HEK293T (cell line): ENCODE measurements at regions of chr12 and their contacts with region 1.

Region 1: DNA sequence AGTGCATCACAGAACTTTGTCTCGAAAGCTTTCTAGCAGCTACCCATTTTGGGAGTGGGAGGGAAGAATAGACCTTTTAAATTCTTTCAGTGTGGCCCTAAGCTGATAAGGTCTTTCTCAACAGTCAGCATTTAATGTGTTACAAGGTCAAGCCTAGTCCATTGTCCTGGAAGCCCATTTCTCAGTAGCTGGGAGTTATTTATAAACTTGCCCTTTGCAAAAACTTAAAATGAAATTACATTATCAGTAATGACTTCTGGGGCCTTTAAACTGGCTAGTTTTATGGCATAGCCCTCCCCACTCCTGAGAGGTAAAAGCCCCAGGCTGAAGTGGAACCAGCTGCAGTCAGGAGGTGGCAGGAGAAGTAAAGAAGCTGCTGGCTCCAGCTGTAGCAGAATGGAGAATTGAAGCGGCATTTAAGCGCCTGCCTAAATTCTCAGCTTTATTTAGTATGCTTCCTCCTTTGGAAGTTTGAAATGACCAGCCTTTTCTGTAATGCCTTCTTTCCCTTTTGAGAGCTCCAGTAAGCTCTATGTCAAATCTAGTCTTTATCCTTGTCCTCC is 12.4 kb downstream of the COPZ1 start:
- DNase-seq: no peak

Region 2: DNA sequence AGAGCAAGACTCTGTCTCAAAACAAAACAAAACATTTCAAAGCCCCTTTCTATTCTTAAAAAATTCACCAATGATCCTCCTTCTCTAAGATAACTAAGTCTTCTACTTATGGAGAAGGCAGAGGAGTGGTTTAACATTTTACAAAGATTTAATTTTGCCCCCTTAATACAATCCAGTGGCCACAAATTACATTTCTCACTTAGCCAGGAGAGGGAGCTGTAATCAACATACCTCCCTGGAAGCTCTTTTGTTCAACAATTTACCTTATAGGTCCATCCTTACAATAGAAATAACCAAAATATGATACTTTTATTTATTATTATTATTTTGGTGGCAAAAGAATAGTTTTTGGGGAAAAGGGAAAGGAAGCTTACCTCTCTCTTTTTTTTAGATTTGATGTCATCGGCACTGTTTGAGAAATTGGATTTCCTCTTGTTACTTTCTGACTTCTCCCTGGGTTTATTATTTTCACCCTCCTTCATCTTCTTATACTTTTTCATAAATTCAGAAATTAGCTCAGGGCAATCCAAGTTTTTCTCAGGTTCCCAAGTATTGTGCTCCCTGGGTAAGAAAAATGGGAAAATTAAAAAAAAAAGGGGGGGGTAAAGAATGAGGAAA is 85.6 kb before region 1 on chr12:
- CTCF ChIA-PET with region 1: interaction called, 10 read pairs
- POLR2A ChIA-PET with region 1: no interaction called
- DNase-seq: peak; percentile 49

Region 3: DNA sequence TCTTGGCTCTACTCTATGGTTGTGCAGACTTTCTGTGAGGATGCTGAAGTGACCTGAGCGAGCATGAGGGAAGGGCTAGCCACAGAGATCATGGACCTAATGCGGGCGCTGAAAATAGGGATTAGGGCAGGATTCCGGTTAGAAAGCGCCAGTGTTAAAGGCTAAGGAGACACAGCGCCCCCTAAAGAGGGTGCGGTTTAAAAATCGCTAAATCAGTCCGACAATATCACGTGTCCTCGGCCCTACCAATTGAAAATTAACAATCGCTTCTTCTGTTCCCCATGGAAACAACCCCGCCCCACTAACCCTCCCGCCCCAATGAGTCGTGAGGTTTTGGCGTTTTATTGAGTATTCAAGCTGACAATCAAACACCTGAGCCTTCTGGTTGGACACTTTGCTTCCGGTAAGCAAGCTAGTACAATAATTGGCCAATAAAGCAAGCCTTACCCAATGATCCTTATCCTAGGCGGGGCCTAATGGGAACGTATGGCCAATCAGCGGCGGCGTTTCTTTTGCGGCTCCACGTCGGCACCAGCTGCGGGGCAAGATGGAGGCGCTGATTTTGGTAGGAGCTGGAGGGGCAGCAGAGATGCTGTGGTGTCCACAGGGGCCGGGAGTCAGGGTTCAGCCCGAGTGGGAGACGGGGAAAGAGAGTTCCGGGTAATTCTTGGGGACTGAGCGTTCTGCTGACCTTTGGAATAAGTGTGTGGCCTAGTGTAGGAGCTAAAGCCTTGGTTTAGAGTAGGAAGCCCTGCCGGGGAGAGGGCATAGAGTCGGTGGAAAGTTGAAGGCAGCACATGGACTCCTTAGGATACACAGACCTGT is 12.5 kb before region 1 on chr12 and contains the start of gene COPZ1:
- CTCF ChIA-PET with region 1: interaction called, 16 read pairs
- POLR2A ChIA-PET with region 1: interaction called, 9 read pairs
- DNase-seq: peak; percentile 91

Region 4: GRCh38 chr12:54352022-54352531 is 14.7 kb after region 1 on chr12:
- CTCF ChIA-PET with region 1: interaction called, 17 read pairs
- POLR2A ChIA-PET with region 1: interaction called, 16 read pairs
- DNase-seq: no peak

Region 5: DNA sequence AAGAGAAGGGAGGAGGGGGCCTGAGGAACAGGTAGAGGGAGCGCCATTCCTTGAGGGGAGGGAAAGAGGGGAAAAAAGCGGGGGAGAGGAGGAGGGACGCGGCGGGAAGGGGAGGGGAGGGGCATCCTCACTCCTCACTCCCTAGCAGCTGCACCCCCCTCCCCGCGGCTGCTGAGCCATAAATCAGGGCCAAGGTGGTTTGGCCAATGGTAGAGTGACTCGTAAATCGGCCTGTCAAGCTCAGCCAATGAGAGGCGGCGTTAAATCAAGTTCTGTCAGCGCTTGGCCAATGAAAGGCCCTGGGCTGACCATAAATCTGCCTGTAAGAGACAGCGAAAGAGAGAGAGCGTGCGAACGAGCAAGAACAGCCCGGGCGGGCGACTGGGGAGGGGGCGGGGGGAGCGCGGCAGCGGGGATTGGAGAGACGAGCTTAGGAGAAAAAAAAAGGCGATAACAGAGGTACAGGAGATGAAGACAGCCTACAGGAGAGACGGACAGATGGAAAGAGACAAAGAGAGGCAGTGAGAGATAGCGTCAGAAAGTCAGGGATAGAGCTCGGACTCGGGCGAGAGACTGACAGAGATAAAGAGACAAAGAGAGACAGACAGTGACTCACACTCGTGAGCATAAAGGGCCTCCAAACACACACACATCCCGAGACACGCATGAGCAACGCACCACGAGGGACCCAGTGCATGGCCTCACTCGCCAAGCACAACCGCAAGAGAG is 21.8 kb after region 1 on chr12:
- CTCF ChIA-PET with region 1: interaction called, 17 read pairs
- POLR2A ChIA-PET with region 1: interaction called, 16 read pairs
- DNase-seq: peak; percentile 92

Region 6: GRCh38 chr12:54379401-54380201 is 42.2 kb after region 1 on chr12:
- CTCF ChIA-PET with region 1: interaction called, 11 read pairs
- POLR2A ChIA-PET with region 1: interaction called, 3 read pairs
- DNase-seq: peak; percentile 94

Region 7: DNA sequence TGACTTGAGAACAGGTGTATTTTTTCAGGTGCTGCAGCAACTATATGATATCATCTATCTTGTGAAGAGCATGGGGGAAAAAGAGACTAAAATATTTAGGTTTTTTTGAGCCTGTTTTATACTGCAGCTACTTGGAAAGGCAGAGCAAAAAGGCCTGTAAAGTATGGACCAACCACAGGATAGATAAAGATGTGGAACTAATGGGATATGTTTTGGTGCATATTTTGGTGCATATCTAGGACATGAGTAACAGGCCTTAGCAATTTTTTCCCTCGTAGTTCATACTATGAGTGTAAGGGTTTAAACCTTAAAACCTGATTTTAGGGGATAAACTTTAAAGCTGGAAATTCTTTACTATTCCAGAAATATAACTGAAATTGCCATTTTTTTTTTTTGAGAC is 142.1 kb after region 1 on chr12:
- CTCF ChIA-PET with region 1: no interaction called
- POLR2A ChIA-PET with region 1: no interaction called
- DNase-seq: no peak